ENCODE measurements at regions of chr7 and their contacts with region 1.

Region 1: DNA sequence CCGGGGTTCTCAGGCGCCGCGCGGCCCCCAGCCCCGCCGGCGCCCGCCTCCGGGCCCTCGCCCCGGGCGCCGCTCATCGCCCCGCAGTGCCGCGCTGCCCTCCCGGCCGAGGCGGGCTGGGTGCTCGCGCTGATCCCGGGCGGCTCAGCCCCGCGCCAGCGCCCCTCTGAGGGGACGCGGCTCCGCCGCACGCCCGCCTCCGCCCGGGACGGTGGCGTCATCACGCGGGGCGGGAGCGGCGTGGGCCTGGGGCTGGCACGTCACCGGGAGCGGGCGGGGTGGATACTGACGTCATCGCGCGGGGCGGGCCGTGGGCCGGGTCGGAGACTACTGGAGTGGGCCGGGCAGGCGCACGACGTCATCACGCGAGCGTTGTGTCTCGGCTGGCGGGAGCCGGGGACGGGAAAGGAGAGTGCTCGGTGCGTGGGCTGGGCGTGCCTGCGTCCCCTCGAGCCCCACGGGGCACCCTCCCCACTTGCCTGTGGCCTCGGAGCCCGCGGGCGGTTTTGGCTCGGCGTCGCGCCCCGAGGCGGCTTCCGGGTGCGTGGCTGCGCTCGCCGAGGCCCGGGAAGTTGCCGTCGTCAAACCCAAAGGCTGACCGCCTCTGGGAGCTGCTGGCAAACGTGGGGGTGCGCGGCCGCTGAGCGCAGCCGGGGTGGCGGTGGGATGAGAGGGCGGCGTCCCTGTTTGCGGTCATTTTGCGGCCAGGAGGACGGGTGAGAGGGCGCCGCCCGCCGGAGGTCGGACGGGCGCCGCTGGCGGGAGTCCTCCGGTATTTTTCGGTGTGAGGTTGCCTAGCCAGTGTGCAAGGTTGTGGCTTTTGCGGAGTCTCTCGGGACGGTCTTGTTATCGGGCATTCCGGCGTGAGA is at the start of gene ESYT2:
- DNase-seq: peak; percentile 99
- ATAC-seq: peak; percentile 93 to 95
- total RNA-seq, gene ESYT2: 46.5 to 79.3 TPM

Region 2: GRCh38 chr7:158782761-158783401 is 46.7 kb before region 1 on chr7:
- intact Hi-C with region 1: loop called (anchors 5 kb)
- DNase-seq: peak; percentile 76
- ATAC-seq: peak; percentile 87 to 94

Measured in left cardiac atrium (tissue), 4 donors.